Sigmoid colon (tissue), 7 donors: ENCODE measurements at regions of chr18 and their contacts with region 1.

Region 1: GRCh38 chr18:59070181-59070912 is 69.3 kb upstream of the SEC11C start:
- DNase-seq: peak; percentile 91
- H3K4me3 ChIP-seq: no peak overlapping the region
- H3K27ac ChIP-seq: no peak overlapping the region
- H3K4me1 ChIP-seq: no peaks in the 10 kb centered on the region
- H3K27me3 ChIP-seq: no peaks in the 10 kb centered on the region
- CTCF ChIP-seq: peak; percentile 84 to 91 (median 87)
- EP300 ChIP-seq: no peak
- POLR2A ChIP-seq: no peak

Region 2: DNA sequence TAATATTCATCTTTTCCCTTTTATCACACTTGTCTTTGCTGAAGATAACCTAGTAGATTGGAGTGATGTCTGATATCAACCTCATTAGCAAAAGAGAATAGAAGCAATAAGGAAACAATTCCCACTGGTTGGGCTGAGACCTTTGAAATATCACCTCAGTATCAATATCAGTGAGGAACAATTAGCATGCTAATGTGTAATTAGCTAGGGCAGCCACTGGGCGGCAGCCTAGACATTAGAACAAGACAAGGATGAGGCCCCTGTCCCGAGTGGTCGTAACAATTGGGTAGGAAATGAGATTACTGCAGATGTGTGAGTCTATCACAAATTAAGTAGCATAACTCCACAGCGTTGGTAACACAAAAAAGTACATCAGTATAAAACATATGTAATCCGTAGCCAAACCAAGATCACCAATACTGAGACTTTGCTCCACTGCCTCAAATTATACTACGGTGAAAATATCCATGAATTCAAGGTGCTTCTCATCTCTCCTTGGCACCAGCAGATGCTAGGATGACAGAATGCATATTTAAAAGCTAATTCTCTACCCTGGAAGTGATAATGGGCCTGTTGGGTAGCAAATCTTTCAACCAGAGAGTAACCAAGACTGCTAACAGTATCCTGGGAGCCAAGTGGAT is 540.5 kb before region 1 on chr18:
- intact Hi-C with region 1: loop called (anchors 5 kb)
- DNase-seq: no peak
- H3K4me3 ChIP-seq: no peak overlapping the region
- H3K27ac ChIP-seq: no peak overlapping the region
- H3K4me1 ChIP-seq: no peaks in the 10 kb centered on the region
- H3K27me3 ChIP-seq: no peaks in the 10 kb centered on the region
- CTCF ChIP-seq: peak; percentile 51 to 80 (median 78)
- EP300 ChIP-seq: no peak
- POLR2A ChIP-seq: no peak

Region 3: DNA sequence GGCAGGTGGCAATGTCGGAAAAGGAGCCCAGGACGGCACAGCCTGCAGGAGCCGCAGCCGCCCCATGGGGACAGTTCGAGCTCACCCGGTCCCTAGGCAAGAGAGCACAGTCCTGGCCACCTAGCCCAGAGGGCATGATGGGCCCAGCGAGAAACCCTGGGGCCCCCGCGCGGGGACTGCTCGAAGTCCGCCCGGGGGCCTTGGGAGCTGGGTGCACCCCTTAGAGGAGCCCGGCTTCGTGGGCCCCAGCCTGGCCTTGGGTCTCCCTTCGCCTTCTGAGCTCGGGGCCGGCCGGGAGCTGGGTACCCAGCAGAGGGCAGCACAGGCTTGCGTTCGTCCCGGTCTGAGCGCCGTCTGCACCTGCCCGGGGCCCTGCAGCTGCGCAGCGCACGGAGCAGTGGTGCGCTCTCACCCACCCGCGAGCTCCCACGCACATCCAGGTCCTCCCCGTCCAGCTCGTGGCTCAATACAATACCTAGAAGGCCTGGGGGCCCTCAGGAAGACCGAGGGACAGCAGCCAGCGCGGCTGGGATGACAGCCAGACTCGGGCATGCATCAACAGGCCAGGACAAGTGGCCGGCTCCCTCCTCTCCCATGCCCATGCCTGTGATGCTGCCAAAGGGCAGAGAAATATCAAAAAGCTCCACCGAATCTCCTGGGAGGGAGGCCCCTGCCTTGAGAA is 301.9 kb before region 1 on chr18:
- intact Hi-C with region 1: loop called (anchors 5 kb)
- DNase-seq: peak; percentile 84
- H3K4me3 ChIP-seq: peak overlapping the region in 3 of 4 donors; percentile 26 to 40 (median 28)
- H3K27ac ChIP-seq: no peak overlapping the region
- H3K4me1 ChIP-seq: peaks cover 0 to 14% (median 10%) of the 10 kb centered on the region in 4 donors
- H3K27me3 ChIP-seq: no peaks in the 10 kb centered on the region
- CTCF ChIP-seq: peak; percentile 54 to 79 (median 66)
- EP300 ChIP-seq: no peak
- POLR2A ChIP-seq: no peak

Region 4: DNA sequence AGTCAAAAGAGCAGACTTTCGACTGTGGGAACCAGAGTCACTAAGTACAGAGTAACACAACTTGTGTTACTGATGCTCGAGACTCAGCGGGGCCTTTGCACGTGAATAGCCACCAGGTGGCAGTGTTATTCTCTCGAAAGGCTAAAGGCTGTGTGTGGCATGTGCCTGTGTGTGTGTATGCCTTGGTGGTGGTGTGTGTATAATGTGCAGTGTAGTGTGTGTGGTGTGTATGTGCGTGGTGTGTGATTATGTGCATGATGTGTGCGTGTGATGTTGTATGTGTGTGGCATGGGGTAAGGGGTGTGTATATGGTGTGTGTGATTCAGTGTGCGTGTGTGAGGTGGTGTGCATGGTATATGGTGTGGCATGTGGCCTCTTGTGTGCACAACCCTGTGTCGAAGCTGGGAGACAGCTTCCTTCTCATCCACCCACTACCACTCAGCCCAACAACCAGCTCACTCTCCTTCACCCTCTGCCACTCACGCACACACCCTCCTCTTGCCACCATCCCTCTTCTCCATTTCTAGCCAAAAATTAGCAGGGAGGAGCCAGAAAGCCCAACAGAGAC is 288.6 kb before region 1 on chr18:
- intact Hi-C with region 1: loop called (anchors 1 kb)
- DNase-seq: peak; percentile 85
- H3K4me3 ChIP-seq: no peak overlapping the region
- H3K27ac ChIP-seq: no peak overlapping the region
- H3K4me1 ChIP-seq: peaks cover 0 to 28% (median 14%) of the 10 kb centered on the region in 4 donors
- H3K27me3 ChIP-seq: no peaks in the 10 kb centered on the region
- CTCF ChIP-seq: peak; percentile 93 to 97 (median 94)
- EP300 ChIP-seq: no peak
- POLR2A ChIP-seq: no peak

Region 5: DNA sequence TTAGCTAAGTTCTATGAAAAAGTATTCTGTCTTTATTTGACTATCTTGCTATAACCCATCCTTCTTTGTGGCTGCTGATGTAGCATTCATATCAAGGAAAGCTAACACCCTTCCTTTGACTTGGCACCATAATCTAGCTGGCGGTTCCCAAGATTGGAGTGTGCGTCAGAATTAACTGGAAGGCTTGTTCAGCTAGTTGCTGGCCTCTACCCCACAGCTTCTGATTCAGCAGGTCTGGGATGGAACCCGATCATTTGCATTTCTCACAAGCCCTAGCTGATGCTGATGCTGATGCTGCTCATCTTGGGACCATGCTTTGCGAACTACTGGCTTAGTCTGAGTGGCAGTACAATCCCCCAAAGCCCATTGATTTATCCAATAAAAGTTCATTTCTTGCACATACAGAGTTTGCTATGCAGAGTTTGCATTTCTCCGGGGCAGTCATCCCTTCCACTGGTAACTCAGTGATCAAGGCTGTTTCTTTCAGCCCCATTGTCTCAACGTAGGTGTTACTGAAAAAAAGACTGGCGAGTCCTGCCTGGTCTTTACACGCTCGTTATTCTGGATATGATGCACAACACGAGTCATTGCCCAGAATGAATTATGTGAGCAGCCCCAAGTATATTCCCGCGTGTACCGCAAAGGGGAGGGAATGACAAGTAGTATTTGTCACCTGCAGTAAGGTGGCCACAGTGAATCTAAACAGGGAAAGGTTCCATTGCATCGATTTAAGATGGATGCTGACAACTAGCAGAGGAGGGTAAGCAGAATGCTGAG is 109.2 kb before region 1 on chr18:
- intact Hi-C with region 1: loop called (anchors 10 kb)
- DNase-seq: no peak
- H3K4me3 ChIP-seq: no peak overlapping the region
- H3K27ac ChIP-seq: no peak overlapping the region
- H3K4me1 ChIP-seq: peaks cover 0 to 21% (median 9%) of the 10 kb centered on the region in 4 donors
- H3K27me3 ChIP-seq: no peaks in the 10 kb centered on the region
- CTCF ChIP-seq: no peak
- EP300 ChIP-seq: no peak
- POLR2A ChIP-seq: no peak

Region 6: DNA sequence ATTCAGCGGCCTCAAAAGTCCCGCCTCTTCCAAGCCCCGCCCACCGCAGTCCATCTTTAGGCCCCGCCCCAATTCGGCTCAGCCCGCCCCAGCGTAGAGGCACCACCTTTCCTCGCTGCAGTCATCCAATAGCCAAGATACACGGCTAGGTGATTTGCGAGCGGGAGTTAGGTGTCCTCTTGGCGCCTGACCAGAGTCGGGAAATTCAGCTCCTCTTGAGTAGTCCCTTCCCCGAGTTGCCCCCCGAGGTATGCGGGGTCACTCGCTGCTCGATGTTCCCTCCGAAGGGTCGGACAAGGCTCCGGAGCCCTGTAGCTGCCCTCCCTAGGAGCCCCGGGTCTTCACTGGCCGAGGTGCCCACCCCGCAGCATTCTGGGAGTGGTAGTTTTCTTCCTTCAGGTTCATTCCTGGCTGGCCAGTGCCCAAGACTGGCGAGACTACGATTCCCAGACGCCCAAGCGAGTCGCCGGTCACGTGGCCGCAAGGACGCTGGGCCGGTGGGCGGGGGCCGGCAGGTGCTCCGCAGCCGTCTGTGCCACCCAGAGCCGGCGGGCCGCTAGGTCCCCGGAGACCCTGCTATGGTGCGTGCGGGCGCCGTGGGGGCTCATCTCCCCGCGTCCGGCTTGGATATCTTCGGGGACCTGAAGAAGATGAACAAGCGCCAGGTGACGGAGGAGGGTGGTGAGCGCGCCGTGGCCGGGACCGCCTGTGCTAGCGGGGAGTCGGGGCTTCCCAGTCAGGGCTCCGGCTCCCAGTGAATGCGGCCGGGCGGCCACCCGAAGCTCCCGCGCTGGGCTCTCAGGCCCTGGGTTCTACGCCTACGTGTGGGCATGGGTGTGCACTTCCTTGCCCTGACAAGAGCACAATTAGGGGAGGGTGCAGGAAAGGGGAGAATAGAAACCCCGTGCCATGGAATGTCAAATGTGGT is 69.3 kb after region 1 on chr18 and contains the start of gene SEC11C:
- intact Hi-C with region 1: no loop called
- DNase-seq: peak; percentile 98
- H3K4me3 ChIP-seq: peak within 1 kb of the TSS; percentile 73 to 94 (median 81)
- H3K27ac ChIP-seq: peak within 1 kb of the TSS; percentile 76 to 83 (median 78)
- H3K4me1 ChIP-seq: peaks cover 0 to 21% (median 13%) of the 10 kb centered on the region in 4 donors
- H3K27me3 ChIP-seq: no peaks in the 10 kb centered on the region
- CTCF ChIP-seq: no peak
- EP300 ChIP-seq: no peak
- POLR2A ChIP-seq: no peak
- total RNA-seq, gene SEC11C: 9.4 to 51.7 (median 30.8) TPM